ENCODE measurements at regions of chr11 and their contacts with region 1.

Region 1: DNA sequence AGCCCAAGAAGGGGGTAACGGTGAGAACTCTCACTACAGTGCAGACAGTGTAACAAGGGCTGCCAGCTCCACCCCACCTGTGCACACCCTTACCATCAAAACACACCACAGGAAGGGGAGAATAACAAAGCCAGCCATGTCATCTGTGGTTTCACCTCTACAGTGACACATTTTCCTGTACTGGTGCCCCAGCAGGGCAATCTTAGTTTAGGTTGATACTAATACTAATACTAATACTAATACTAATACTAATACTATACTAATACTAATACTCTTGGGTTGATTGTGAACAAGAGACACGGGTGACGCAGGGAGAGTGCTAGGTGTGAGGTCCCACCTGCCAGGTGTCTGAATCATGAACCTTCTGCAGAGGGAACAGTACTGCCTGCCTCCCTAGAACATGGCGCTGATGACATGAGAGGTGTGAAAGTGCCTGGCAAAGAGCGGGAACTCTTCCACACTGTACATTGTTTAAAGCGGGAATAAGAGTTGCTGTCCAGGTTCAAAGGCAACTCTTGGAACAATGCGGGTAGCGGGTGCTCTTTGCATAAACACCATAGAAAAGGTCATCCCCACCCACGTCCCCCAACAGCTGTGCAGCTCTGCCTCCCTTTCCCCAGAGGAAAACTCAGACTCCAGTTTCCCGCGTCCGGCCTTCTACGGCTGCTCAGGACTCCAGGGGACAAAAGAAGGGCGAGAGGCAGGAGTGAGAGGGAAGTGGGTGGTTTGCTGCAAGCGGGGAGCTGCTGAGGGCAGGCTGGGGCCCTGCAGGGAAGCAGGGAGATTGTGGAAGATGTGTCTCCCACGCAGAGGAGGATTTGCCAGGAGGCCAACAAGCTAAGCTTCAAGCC is 25.0 kb upstream of the TMPRSS4 start:
- DNase-seq: peak; percentile 87
- ATAC-seq: peak; percentile 82
- H3K4me3 Mint-ChIP-seq: peak overlapping the region; percentile 9
- H3K27ac Mint-ChIP-seq: peak overlapping the region; percentile 90
- H3K4me1 Mint-ChIP-seq: peaks cover 67% of the 10 kb centered on the region
- H3K27me3 Mint-ChIP-seq: peaks cover 3% of the 10 kb centered on the region

Region 2: DNA sequence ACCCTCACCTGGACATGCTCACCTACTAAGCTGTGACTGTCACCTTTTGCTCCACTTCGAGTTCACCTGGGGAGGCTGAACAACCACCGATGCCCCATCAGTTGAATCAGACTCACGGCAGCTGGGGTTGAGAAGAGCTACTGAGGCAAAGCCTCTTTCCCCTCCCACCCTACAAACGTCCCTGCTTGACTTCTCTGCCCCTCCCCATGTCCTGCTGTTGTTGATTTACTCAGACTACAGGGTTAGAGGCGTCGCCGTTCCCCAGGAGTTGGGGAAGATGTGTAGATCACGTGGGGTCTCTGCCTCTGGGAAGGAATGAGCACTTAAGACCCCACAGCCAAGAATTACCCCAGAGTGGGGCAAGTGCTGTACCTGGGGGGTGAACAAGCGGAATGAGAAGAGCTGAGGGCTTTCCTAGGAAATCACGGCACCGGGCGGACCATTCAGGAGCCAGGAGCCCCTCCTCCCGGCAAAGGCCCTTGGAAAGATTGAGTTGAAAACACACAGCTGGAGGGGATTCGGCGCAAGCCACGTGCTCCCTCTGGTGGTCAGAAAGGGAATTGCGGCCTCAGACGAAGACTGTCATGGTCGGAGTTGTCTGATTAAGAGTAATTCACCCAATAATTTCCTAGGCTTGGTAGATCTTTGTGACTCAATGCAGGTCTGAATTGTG is 234.3 kb before region 1 on chr11:
- CTCF ChIA-PET with region 1: interaction called, 148 read pairs
- DNase-seq: peak; percentile 93
- ATAC-seq: peak; percentile 43
- H3K4me3 Mint-ChIP-seq: peak overlapping the region; percentile 40
- H3K27ac Mint-ChIP-seq: peak overlapping the region; percentile 98
- H3K4me1 Mint-ChIP-seq: peaks cover 69% of the 10 kb centered on the region
- H3K27me3 Mint-ChIP-seq: no peaks in the 10 kb centered on the region

Region 3: DNA sequence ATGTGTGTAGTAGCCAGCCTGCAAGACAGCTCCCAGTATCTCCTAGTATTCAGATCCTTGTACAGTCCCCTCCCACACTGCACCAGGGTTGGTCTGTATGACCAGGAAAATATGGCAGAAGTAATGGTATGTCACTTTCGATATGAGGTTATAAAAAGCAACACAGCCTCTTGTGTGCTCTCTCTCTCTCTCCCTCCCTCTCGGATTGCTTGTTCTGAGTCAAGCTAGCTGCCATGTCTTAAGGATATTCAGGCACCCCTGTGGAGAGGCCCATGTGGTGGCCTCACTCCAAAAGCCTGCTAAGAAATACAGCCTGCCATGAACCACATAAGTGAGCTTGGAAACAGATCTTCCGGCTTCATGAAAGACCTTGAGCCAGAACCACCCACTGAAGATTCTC is 200.7 kb before region 1 on chr11:
- CTCF ChIA-PET with region 1: interaction called, 62 read pairs
- DNase-seq: peak; percentile 18
- ATAC-seq: no peak
- H3K4me3 Mint-ChIP-seq: no peak overlapping the region
- H3K27ac Mint-ChIP-seq: no peak overlapping the region
- H3K4me1 Mint-ChIP-seq: peaks cover 9% of the 10 kb centered on the region
- H3K27me3 Mint-ChIP-seq: peaks cover 25% of the 10 kb centered on the region

Region 4: DNA sequence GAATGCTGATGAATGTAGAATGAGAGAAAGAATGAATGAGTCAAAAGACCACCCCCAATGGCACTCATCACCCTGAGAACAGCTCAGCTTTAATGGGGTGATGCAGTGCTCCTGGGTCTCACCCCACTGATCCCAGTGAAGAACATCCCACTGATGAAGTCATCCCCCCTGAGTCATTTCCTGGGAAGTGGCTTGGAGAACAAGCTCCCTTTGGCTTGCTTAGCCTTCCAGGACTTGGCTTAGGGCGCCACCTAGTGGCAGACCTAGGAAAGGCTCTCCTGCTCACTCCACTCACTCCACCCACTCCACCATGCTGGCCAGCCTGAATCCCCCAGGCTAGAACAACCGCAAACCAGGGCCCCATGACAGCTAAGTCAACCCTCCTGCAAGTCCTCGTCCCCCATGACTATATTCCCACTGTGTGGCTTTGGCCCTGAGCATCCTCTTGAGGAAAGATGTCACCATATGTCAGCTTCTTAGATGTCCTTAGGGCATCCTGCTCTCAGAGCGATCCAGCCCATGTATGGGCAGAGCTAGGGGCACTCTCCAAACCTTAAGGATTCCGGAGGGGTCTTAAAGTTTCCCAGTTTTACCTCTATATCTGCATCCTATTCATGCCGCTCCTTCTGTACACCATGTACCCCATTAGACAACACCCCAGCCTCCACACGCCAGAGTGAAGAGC is 104.9 kb before region 1 on chr11:
- CTCF ChIA-PET with region 1: interaction called, 284 read pairs
- DNase-seq: peak; percentile 89
- ATAC-seq: peak; percentile 47
- H3K4me3 Mint-ChIP-seq: no peak overlapping the region
- H3K27ac Mint-ChIP-seq: peak overlapping the region; percentile 68
- H3K4me1 Mint-ChIP-seq: peaks cover 85% of the 10 kb centered on the region
- H3K27me3 Mint-ChIP-seq: no peaks in the 10 kb centered on the region

Region 5: GRCh38 chr11:118002541-118003423 is 49.1 kb before region 1 on chr11:
- CTCF ChIA-PET with region 1: interaction called, 346 read pairs
- DNase-seq: peak; percentile 85
- ATAC-seq: peak; percentile 53
- H3K4me3 Mint-ChIP-seq: peak overlapping the region; percentile 54
- H3K27ac Mint-ChIP-seq: peak overlapping the region; percentile 98
- H3K4me1 Mint-ChIP-seq: peaks cover 100% of the 10 kb centered on the region
- H3K27me3 Mint-ChIP-seq: no peaks in the 10 kb centered on the region

Region 6: GRCh38 chr11:118152552-118153471 is 101.0 kb after region 1 on chr11 and contains the start of gene SCN4B:
- CTCF ChIA-PET with region 1: no interaction called
- DNase-seq: no peak
- ATAC-seq: peak; percentile 70
- H3K4me3 Mint-ChIP-seq: peak within 1 kb of the TSS; percentile 54
- H3K27ac Mint-ChIP-seq: no peak within 1 kb of the TSS
- H3K4me1 Mint-ChIP-seq: peaks cover 20% of the 10 kb centered on the region
- H3K27me3 Mint-ChIP-seq: peaks cover 92% of the 10 kb centered on the region
- total RNA-seq, gene SCN4B: 0.54 TPM in 1 of 2 experiments, not detected in the other

Region 7: DNA sequence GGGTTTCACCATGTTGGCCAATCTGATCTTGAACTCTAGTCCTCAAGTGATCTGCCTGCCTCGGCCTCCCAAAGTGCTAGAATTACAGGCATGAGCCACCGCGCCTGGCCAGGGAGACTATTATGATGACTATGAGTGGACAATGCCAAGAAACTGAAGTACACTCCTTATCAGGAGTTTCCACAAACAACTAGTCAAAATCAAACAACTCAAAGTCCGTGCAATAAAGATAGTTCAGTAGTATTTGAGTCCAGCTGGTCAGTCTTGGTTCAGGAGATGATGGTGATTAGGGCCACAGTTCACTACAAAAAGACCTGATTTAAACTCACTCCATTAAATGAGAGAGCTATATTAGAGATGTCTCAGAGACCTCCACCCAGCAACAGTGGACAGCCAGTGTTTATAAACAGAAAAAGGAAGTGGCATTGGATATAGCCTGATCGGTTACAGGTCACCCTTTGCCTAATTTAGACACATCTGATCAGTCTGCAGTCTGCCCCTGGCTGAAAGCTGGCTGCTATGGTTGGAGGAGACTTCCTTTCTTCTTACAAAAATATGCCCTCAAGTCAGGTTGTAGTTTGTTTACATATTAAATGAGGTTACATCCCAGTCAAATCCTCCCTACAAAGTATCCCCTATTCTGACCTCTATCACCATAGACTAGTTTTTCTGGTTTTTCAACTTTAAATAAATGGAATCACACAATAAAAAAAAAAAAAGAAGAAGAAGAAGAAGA is 269.7 kb after region 1 on chr11:
- CTCF ChIA-PET with region 1: no interaction called
- DNase-seq: no peak
- ATAC-seq: no peak
- H3K4me3 Mint-ChIP-seq: no peak overlapping the region
- H3K27ac Mint-ChIP-seq: peak overlapping the region; percentile 8
- H3K4me1 Mint-ChIP-seq: peaks cover 43% of the 10 kb centered on the region
- H3K27me3 Mint-ChIP-seq: no peaks in the 10 kb centered on the region

Measured in activated CD8-positive, alpha-beta memory T cell treated with anti-CD3 and anti-CD28 coated beads, Interleukin-2, amount 10 ng/mL, durations not matched to agents 7 days and 5 days (primary cell).